Naive thymus-derived CD4-positive, alpha-beta T cell (primary cell): ENCODE measurements at regions of chr7 and their contacts with region 1.

Region 1: DNA sequence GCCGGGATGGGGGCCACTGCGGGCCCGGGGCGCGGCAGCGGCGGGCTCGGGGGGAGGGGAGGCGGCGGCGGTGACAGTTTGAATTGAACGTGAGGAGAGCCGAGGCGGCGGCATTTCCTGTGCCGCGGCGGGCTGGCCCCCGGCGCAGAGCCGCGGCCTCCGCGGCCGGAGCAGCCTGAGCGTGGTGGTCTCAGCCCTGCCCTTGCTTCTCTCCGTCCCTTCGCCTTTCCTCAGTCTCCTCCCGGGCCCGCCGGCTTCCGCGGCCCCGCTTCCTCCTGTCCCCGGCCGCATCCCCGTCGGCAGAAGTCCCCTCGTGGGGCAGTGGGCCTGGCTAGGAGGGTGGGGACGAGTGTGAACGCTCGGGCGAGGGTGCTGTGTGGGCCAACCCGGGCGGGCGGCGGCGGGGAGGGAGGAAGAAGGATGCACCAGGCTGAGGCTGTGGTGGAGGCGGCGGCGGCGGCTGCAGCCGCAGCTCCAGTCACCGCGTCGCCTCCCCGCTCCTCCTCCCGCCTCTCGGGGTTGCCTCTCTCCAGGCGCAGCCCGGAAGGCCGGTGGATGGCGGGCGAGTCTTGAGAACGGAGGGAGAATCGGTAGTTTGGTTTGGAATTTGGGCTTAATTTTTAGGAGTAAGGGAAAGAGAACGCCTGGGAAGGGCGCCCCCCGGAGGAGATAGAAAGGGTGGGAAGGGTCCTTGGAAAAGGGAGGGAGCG is 690 bp downstream of the SEPTIN7 start:
- DNase-seq: peak; percentile 65 to 78 (median 75)
- ATAC-seq: peak; percentile 55
- H3K4me3 ChIP-seq: peak overlapping the region; percentile 78
- H3K4me3 Mint-ChIP-seq: peak overlapping the region; percentile 78 to 98 (median 93)
- H3K27ac ChIP-seq: peak overlapping the region; percentile 96
- H3K27ac Mint-ChIP-seq: peak overlapping the region; percentile 58 to 100 (median 99)
- H3K4me1 ChIP-seq: peaks cover 37 to 49% of the 10 kb centered on the region in 2 donors
- H3K4me1 Mint-ChIP-seq: peaks cover 43 to 59% (median 52%) of the 10 kb centered on the region in 7 donors
- H3K27me3 ChIP-seq: no peaks in the 10 kb centered on the region
- H3K27me3 Mint-ChIP-seq: no peaks in the 10 kb centered on the region

Region 2: DNA sequence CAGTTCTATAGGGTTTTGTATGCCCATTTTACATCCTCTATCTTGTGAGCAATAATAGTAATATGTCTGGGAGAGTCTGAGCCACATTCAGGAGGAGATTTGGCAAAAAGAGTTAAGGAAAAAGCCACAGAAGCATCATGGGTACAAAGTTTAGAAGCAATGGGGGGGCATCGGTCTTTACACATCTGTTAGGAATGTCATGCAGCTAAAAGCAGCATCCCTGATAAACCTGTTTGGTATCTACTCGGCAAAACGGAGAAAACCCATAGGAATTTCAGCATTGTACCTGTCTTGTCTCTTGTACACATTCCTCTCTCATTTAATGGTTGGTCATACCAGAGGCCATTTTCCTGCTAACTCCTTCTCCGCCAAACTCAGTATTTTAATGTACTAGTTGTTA is 94.1 kb before region 1 on chr7:
- CTCF ChIA-PET with region 1: interaction called, 13 read pairs
- POLR2A ChIA-PET with region 1: interaction called, 41 read pairs
- intact Hi-C with region 1: loop called (anchors 1 kb)
- DNase-seq: no peak
- ATAC-seq: no peak
- H3K4me3 ChIP-seq: no peak overlapping the region
- H3K4me3 Mint-ChIP-seq: no peak overlapping the region
- H3K27ac ChIP-seq: no peak overlapping the region
- H3K27ac Mint-ChIP-seq: peak overlapping the region in 1 of 9 donors; percentile 15
- H3K4me1 ChIP-seq: peaks cover 8% of the 10 kb centered on the region in 2 donors
- H3K4me1 Mint-ChIP-seq: peaks cover 5 to 30% (median 21%) of the 10 kb centered on the region in 7 donors
- H3K27me3 ChIP-seq: no peaks in the 10 kb centered on the region
- H3K27me3 Mint-ChIP-seq: peaks cover 0 to 21% (median 0%) of the 10 kb centered on the region in 5 donors

Region 3: GRCh38 chr7:35816514-35816913 is 15.0 kb after region 1 on chr7:
- CTCF ChIA-PET with region 1: interaction called, 3 read pairs
- POLR2A ChIA-PET with region 1: interaction called, 15 read pairs
- intact Hi-C with region 1: loop called in 1 of 2 experiments (anchors 1 kb)
- DNase-seq: no peak
- ATAC-seq: no peak
- H3K4me3 ChIP-seq: no peak overlapping the region
- H3K4me3 Mint-ChIP-seq: peak overlapping the region in 3 of 10 donors; percentile 41 to 52 (median 48)
- H3K27ac ChIP-seq: no peak overlapping the region
- H3K27ac Mint-ChIP-seq: peak overlapping the region in 1 of 9 donors; percentile 48
- H3K4me1 ChIP-seq: no peaks in the 10 kb centered on the region
- H3K4me1 Mint-ChIP-seq: peaks cover 49 to 94% (median 90%) of the 10 kb centered on the region in 7 donors
- H3K27me3 ChIP-seq: no peaks in the 10 kb centered on the region
- H3K27me3 Mint-ChIP-seq: no peaks in the 10 kb centered on the region

Region 4: GRCh38 chr7:35889001-35889400 is 87.5 kb after region 1 on chr7:
- CTCF ChIA-PET with region 1: no interaction called
- POLR2A ChIA-PET with region 1: interaction called, 6 read pairs
- intact Hi-C with region 1: loop called (anchors 5 kb)
- DNase-seq: no peak
- ATAC-seq: no peak
- H3K4me3 ChIP-seq: no peak overlapping the region
- H3K4me3 Mint-ChIP-seq: no peak overlapping the region
- H3K27ac ChIP-seq: no peak overlapping the region
- H3K27ac Mint-ChIP-seq: peak overlapping the region in 3 of 9 donors; percentile 42 to 76 (median 60)
- H3K4me1 ChIP-seq: no peaks in the 10 kb centered on the region
- H3K4me1 Mint-ChIP-seq: peaks cover 7 to 34% (median 26%) of the 10 kb centered on the region in 7 donors
- H3K27me3 ChIP-seq: no peaks in the 10 kb centered on the region
- H3K27me3 Mint-ChIP-seq: no peaks in the 10 kb centered on the region

Region 5: DNA sequence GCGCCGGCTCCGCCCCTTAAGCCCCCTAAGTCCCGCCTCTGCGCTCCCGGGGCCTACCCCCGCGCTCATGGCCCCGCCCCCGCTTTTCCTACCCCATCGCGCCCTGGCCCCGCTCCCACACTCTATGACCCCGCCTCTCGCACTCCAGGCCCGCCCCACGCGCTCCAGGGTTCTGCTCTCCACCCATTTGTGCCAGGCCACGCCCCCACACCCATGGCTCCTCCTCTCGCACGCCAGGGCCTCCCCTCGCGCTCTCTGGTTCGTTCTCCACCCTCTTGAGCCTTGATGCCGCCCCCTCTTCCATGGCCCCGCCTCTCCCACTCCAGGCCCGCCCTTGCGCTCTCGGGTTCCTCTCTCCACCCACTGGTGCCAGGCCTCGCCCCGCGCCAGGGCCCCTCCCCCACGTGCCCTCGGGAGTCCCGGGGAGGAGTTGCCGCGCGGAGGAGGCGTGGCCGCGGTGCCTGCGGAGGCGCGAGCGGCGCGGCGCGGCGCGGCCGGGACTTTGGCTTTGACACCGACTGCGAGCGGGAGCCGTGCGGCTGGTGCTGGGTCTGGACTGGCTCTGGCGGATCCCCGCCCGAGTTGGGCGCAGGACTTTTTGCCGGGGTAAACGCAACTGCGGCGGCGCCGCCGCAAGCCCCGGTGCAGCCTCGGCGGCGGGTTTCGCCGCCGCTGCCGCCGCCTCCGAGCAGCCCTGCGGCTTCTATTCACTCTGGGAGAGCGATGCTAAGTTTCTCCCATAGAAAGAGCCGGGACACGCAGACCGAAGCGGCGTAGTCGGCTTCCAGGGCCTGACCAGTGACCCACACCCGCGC is 351.4 kb after region 1 on chr7 and contains the start of gene EEPD1:
- CTCF ChIA-PET with region 1: no interaction called
- POLR2A ChIA-PET with region 1: no interaction called
- intact Hi-C with region 1: loop called (anchors 1 to 5 kb)
- DNase-seq: peak; percentile 99 to 100 (median 100)
- ATAC-seq: peak; percentile 96
- H3K4me3 ChIP-seq: peak within 1 kb of the TSS; percentile 72
- H3K4me3 Mint-ChIP-seq: peak within 1 kb of the TSS; percentile 70 to 93 (median 84)
- H3K27ac ChIP-seq: peak within 1 kb of the TSS; percentile 73
- H3K27ac Mint-ChIP-seq: peak within 1 kb of the TSS in 8 of 9 donors; percentile 10 to 87 (median 74)
- H3K4me1 ChIP-seq: peaks cover 7 to 16% of the 10 kb centered on the region in 2 donors
- H3K4me1 Mint-ChIP-seq: peaks cover 12 to 31% (median 24%) of the 10 kb centered on the region in 7 donors
- H3K27me3 ChIP-seq: no peaks in the 10 kb centered on the region
- H3K27me3 Mint-ChIP-seq: peaks cover 0 to 21% (median 0%) of the 10 kb centered on the region in 5 donors
- total RNA-seq, gene EEPD1: 2.2 to 13.2 (median 3.7) TPM

Region 6: DNA sequence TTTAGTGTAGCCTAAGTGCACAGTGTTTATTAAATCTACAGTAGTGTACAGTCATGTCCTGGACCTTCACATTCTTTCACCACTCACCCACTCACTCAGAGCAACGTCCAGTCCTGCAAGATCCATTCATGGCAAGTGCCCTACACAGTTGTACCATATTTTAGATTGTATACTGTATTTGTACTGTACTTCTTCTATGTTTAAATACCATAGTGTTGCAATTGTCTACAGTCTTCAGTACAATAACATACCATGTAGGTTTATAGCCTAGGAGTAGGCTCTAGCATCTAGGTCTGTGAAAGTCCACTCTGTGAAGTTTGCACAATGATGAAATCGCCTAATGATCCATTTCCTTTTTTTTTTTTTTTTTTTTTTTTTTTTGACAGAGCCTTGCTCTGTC is 363.5 kb after region 1 on chr7:
- CTCF ChIA-PET with region 1: no interaction called
- POLR2A ChIA-PET with region 1: no interaction called
- intact Hi-C with region 1: no loop called
- DNase-seq: no peak
- ATAC-seq: peak; percentile 79
- H3K4me3 ChIP-seq: no peak overlapping the region
- H3K4me3 Mint-ChIP-seq: no peak overlapping the region
- H3K27ac ChIP-seq: no peak overlapping the region
- H3K27ac Mint-ChIP-seq: no peak overlapping the region
- H3K4me1 ChIP-seq: no peaks in the 10 kb centered on the region
- H3K4me1 Mint-ChIP-seq: peaks cover 0 to 14% (median 2%) of the 10 kb centered on the region in 7 donors
- H3K27me3 ChIP-seq: no peaks in the 10 kb centered on the region
- H3K27me3 Mint-ChIP-seq: peaks cover 0 to 5% (median 0%) of the 10 kb centered on the region in 5 donors

Region 7: DNA sequence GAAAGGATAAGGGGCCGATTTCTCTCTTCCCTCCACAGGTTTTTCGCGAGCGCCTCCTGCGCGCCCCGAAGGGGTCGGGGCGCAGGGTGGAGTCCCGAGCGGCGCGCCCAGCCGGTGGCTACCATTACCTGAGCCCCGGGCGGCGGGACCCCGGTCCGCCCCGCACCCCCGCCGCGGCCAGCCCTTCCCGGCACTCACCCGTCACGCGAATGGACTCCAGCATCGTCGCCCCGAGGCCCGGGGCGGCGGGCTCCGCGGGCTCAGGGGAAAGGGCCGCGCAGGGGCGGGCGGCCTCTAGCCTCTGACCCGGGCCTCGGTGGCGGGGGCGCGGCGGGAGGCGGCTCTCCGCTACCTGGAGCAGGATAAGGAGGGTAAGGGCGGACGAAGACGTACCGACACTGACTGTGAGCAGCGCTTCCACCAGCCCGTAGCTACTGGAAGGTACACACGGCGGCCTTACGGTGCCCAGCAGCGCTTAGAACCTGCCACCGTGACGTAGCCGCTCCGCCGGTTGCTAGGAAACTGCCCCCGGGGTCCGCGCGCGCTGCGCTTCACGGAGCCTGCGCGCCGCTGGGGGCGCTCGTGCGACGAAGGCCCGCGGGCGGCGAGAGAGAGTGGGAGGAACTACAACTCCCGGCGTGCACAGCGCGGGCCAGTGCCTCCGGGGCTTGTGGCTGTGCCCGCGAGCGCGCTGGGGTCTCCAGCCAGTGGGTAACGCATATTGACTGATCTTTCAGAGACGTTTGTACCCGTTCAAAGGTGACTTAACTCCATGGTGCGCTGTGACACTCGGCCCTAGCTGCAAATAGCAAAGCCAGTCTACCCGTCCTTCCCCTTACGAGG is 565.4 kb after region 1 on chr7:
- CTCF ChIA-PET with region 1: no interaction called
- POLR2A ChIA-PET with region 1: no interaction called
- intact Hi-C with region 1: loop called in 1 of 2 experiments (anchors 1 kb)
- DNase-seq: peak; percentile 84 to 92 (median 91)
- ATAC-seq: peak; percentile 98
- H3K4me3 ChIP-seq: peak overlapping the region; percentile 76
- H3K4me3 Mint-ChIP-seq: peak overlapping the region; percentile 80 to 97 (median 93)
- H3K27ac ChIP-seq: peak overlapping the region; percentile 70
- H3K27ac Mint-ChIP-seq: peak overlapping the region in 8 of 9 donors; percentile 51 to 94 (median 82)
- H3K4me1 ChIP-seq: peaks cover 0 to 5% of the 10 kb centered on the region in 2 donors
- H3K4me1 Mint-ChIP-seq: peaks cover 0 to 8% (median 5%) of the 10 kb centered on the region in 7 donors
- H3K27me3 ChIP-seq: no peaks in the 10 kb centered on the region
- H3K27me3 Mint-ChIP-seq: peaks cover 0 to 57% (median 0%) of the 10 kb centered on the region in 5 donors